ENCODE measurements at regions of chr12 and their contacts with region 1.

Region 1: DNA sequence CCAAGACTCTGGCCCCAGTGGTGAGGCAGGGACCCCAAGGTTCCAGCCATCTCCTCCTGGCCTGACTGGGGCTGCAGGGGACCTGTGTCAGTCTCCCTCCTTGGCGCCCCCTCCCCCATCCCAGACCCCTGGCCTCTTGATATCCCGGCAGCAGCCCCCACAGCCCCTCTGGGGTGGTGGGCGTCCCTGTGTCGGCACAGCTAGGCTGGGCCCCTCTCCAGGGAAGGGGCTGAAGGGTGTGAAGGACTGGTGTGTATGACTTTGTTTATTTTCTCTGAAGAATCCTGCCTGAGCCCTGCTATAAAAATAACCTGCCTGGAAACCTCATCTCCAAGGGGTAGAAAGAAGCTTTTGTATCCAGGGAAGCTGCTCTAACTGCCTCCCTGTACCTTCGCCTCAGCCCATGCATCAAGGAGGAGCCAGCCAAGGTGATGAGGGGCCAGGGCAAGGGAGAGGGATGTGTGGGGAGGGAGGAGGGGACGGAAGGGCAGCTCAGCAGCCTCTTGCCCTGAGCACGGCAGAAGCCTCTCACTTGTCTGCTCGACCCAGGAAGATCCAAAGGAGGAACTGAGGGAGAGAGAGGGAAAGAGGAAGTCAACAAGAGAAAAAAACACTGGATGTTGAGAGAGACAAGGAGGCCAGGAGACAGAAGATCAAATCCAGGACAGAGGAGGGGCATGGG is 25.4 kb upstream of the COL2A1 start:
- DNase-seq: no peak
- H3K4me3 ChIP-seq: no peak overlapping the region
- H3K27ac ChIP-seq: no peak overlapping the region
- H3K4me1 ChIP-seq: peaks cover 15% of the 10 kb centered on the region
- H3K27me3 ChIP-seq: no peaks in the 10 kb centered on the region
- CTCF ChIP-seq: no peak

Region 2: GRCh38 chr12:47988073-47989022 is 41.3 kb before region 1 on chr12:
- CTCF ChIA-PET with region 1: no interaction called
- dilution Hi-C with region 1: loop called (anchors 5 kb)
- in situ Hi-C with region 1: no loop called
- intact Hi-C with region 1: no loop called
- DNase-seq: no peak
- H3K4me3 ChIP-seq: no peak overlapping the region
- H3K27ac ChIP-seq: no peak overlapping the region
- H3K4me1 ChIP-seq: no peaks in the 10 kb centered on the region
- H3K27me3 ChIP-seq: peaks cover 2% of the 10 kb centered on the region
- CTCF ChIP-seq: no peak

Region 3: DNA sequence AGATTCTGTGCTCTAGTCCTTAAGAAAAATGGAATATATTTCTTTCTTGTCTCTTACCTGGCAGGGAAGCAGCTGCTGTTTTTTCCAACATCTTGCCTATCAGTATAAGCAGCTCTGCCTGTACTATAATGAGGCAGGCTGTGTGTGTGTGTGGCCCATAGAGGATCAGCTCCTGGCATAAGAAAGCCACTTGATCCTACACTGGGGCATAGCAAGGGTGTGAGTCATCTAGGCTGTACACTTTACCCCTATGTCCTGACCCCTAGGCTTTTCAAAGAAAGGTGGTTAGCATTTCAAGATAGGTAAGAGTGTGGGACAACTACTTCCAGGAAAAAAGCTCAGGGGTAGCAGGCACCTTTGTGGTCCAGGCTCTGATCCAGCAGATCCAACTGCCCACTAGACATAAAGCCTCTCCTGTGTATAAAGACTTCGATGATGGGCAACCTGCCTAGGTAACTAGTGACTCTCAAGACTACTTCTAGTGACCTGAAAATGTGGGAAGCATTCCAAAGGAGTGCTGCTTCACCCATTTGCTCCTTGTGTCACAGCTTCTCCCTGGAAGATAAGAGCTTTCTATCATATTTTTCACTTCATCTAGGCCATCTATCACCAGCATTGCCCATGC is 81.2 kb after region 1 on chr12:
- CTCF ChIA-PET with region 1: no interaction called
- dilution Hi-C with region 1: no loop called
- in situ Hi-C with region 1: no loop called
- intact Hi-C with region 1: no loop called
- DNase-seq: no peak
- H3K4me3 ChIP-seq: no peak overlapping the region
- H3K27ac ChIP-seq: no peak overlapping the region
- H3K4me1 ChIP-seq: peaks cover 18% of the 10 kb centered on the region
- H3K27me3 ChIP-seq: no peaks in the 10 kb centered on the region
- CTCF ChIP-seq: no peak

Region 4: GRCh38 chr12:48356041-48356768 is 326.6 kb after region 1 on chr12:
- CTCF ChIA-PET with region 1: no interaction called
- dilution Hi-C with region 1: no loop called
- in situ Hi-C with region 1: no loop called
- intact Hi-C with region 1: no loop called
- DNase-seq: peak; percentile 84
- H3K4me3 ChIP-seq: no peak overlapping the region
- H3K27ac ChIP-seq: no peak overlapping the region
- H3K4me1 ChIP-seq: peaks cover 9% of the 10 kb centered on the region
- H3K27me3 ChIP-seq: no peaks in the 10 kb centered on the region
- CTCF ChIP-seq: no peak

Measured in mammary epithelial cell (primary cell).